CD14-positive monocyte (primary cell): ENCODE measurements at regions of chr3 and their contacts with region 1.

Region 1: GRCh38 chr3:185733980-185734724 is 90.7 kb downstream of the IGF2BP2 start:
- DNase-seq: peak in 2 of 3 donors; percentile 44 to 68
- H3K4me3 ChIP-seq: no peak overlapping the region
- H3K4me3 Mint-ChIP-seq: no peak overlapping the region
- H3K27ac ChIP-seq: peak overlapping the region in 1 of 2 donors; percentile 7
- H3K27ac Mint-ChIP-seq: peak overlapping the region in 4 of 7 donors; percentile 1 to 37 (median 28)
- H3K4me1 ChIP-seq: peaks cover 14 to 37% of the 10 kb centered on the region in 2 donors
- H3K4me1 Mint-ChIP-seq: peaks cover 43% of the 10 kb centered on the region
- H3K27me3 ChIP-seq: no peaks in the 10 kb centered on the region
- H3K27me3 Mint-ChIP-seq: no peaks in the 10 kb centered on the region
- CTCF ChIP-seq: peak; percentile 58

Region 2: DNA sequence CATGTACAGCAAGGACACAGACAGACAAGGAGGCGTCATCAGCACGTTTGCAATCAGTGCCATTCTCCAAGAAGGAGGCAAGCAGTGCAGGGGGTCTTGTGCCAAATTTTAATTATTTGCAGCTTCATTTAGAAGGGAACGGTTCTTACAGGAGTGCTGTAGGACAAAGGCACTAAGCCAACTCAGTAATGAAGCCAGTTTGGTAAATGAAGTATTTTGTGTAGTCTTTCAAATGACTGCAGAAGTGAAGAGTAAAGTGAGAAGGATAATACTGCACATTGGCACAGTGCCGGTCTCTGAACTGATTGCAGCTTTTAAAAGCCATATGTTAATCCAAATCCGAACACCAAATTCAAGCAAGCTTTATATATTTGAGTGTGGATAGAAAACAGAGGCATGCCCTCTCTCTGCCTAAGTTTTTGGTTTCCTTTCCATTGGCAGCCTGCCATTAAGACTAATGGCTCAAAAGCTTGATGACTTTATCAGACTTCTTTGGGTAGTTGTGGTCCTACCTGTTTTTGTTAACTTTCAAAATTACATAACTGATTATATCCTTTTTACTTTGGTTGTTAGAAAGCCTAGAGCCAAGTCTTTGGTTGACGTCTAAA is 46.8 kb before region 1 on chr3:
- intact Hi-C with region 1: loop called (anchors 5 kb)
- DNase-seq: no peak
- H3K4me3 ChIP-seq: no peak overlapping the region
- H3K4me3 Mint-ChIP-seq: no peak overlapping the region
- H3K27ac ChIP-seq: peak overlapping the region in 1 of 2 donors; percentile 82
- H3K27ac Mint-ChIP-seq: peak overlapping the region in 4 of 7 donors; percentile 78 to 95 (median 94)
- H3K4me1 ChIP-seq: peaks cover 35 to 46% of the 10 kb centered on the region in 2 donors
- H3K4me1 Mint-ChIP-seq: peaks cover 38% of the 10 kb centered on the region
- H3K27me3 ChIP-seq: no peaks in the 10 kb centered on the region
- H3K27me3 Mint-ChIP-seq: no peaks in the 10 kb centered on the region
- CTCF ChIP-seq: no peak

Region 3: DNA sequence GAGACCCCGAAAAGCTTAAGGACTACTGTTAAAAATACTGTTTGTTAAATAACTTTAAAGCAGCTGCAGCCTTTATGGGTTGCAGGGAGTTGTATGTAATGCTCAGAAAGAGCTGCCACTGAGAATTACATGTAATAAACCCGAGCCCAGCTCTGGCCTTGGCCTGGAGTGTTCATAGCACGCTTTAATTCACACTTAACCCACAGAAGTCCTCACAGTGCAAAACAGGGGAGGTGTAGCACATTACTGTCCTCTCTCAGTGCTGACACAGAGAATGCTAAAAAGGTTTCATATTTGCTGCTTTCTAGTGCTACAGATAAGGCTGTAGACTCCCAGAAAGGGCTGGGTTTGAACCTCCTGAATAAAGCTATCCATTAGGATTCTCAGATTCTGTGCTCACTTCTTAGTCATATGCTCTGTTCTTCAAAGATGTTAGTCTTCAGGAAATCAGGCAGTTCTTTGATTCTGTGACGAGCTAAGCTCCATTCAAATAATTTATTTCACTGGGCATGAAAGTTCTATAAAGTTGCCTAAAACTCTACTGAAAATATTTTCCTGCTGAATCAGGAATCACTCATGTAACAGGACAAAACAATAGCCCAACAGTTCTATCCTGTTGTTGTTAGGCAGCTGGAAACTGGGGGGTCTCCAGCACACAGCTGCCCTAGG is 40.0 kb before region 1 on chr3:
- intact Hi-C with region 1: loop called (anchors 5 kb)
- DNase-seq: no peak
- H3K4me3 ChIP-seq: no peak overlapping the region
- H3K4me3 Mint-ChIP-seq: no peak overlapping the region
- H3K27ac ChIP-seq: no peak overlapping the region
- H3K27ac Mint-ChIP-seq: no peak overlapping the region
- H3K4me1 ChIP-seq: peaks cover 2 to 3% of the 10 kb centered on the region in 2 donors
- H3K4me1 Mint-ChIP-seq: peaks cover 4% of the 10 kb centered on the region
- H3K27me3 ChIP-seq: no peaks in the 10 kb centered on the region
- H3K27me3 Mint-ChIP-seq: peaks cover 0 to 1% (median 0%) of the 10 kb centered on the region in 3 donors
- CTCF ChIP-seq: no peak

Region 4: GRCh38 chr3:185767002-185767688 is 33.0 kb after region 1 on chr3:
- intact Hi-C with region 1: loop called (anchors 5 kb)
- DNase-seq: peak in 1 of 3 donors; percentile 11
- H3K4me3 ChIP-seq: no peak overlapping the region
- H3K4me3 Mint-ChIP-seq: peak overlapping the region in 1 of 2 donors; percentile 26
- H3K27ac ChIP-seq: peak overlapping the region in 1 of 2 donors; percentile 34
- H3K27ac Mint-ChIP-seq: peak overlapping the region; percentile 8 to 82 (median 58)
- H3K4me1 ChIP-seq: peaks cover 28 to 31% of the 10 kb centered on the region in 2 donors
- H3K4me1 Mint-ChIP-seq: peaks cover 33% of the 10 kb centered on the region
- H3K27me3 ChIP-seq: no peaks in the 10 kb centered on the region
- H3K27me3 Mint-ChIP-seq: peaks cover 0 to 1% (median 0%) of the 10 kb centered on the region in 3 donors
- CTCF ChIP-seq: no peak